ENCODE measurements at regions of chr1 and their contacts with region 1.

Region 1: GRCh38 chr1:205255941-205256780 is 28.4 kb downstream of the TMCC2 start:
- DNase-seq: peak; percentile 91
- H3K4me3 Mint-ChIP-seq: no peak overlapping the region
- H3K27ac Mint-ChIP-seq: no peak overlapping the region
- H3K4me1 Mint-ChIP-seq: no peaks in the 10 kb centered on the region
- H3K27me3 Mint-ChIP-seq: peaks cover 10% of the 10 kb centered on the region

Region 2: GRCh38 chr1:204989266-204990058 is 266.7 kb before region 1 on chr1:
- CTCF ChIA-PET with region 1: interaction called, 99 read pairs
- DNase-seq: peak; percentile 75
- H3K4me3 Mint-ChIP-seq: no peak overlapping the region
- H3K27ac Mint-ChIP-seq: no peak overlapping the region
- H3K4me1 Mint-ChIP-seq: peaks cover 14% of the 10 kb centered on the region
- H3K27me3 Mint-ChIP-seq: peaks cover 44% of the 10 kb centered on the region

Region 3: GRCh38 chr1:205042911-205043806 is 213.0 kb before region 1 on chr1 and contains the start of gene CNTN2:
- CTCF ChIA-PET with region 1: no interaction called
- DNase-seq: no peak
- H3K4me3 Mint-ChIP-seq: no peak within 1 kb of the TSS
- H3K27ac Mint-ChIP-seq: no peak within 1 kb of the TSS
- H3K4me1 Mint-ChIP-seq: no peaks in the 10 kb centered on the region
- H3K27me3 Mint-ChIP-seq: peaks cover 80% of the 10 kb centered on the region

Region 4: DNA sequence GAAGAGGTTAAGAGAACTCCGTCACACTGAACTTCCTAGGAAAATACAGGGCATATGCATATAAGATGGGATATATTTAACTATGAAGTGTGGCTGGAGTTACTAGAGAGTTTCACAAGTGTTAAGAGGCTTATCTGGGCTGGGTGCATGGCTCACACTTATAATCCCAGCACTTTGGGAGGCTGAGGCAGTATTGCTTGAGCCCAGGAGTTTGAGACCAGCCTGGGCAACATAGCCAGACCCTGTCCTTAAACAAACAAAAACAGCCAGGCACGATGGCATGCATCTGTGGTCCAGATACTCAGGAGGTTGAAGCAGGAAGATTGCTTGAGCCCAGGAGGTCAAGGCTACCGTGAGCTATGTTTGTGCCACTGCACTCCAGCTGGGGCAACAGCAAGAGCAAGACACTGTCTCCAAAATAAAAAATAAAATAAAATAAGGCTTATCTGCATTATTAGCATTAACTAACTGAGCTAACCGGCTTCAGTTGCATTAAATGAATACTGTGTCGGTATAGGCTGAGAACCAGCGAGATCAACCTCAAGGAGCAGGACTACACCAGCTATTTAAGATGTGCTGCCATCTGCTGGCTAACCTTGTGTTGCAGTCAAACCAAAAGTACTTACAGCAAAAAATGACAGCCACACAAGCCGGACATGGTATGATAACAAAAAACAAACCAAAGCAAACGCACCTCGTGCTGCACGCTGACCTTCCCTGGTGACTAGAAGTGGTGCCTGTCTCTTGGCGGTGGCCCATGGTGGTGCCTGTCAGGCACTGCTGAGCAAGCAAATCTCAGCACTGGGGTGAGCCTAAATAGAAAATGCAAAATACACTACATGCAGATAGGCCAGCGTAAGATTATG is 114.7 kb before region 1 on chr1:
- CTCF ChIA-PET with region 1: interaction called, 19 read pairs
- DNase-seq: peak; percentile 86
- H3K4me3 Mint-ChIP-seq: no peak overlapping the region
- H3K27ac Mint-ChIP-seq: no peak overlapping the region
- H3K4me1 Mint-ChIP-seq: peaks cover 6% of the 10 kb centered on the region
- H3K27me3 Mint-ChIP-seq: no peaks in the 10 kb centered on the region

Region 5: DNA sequence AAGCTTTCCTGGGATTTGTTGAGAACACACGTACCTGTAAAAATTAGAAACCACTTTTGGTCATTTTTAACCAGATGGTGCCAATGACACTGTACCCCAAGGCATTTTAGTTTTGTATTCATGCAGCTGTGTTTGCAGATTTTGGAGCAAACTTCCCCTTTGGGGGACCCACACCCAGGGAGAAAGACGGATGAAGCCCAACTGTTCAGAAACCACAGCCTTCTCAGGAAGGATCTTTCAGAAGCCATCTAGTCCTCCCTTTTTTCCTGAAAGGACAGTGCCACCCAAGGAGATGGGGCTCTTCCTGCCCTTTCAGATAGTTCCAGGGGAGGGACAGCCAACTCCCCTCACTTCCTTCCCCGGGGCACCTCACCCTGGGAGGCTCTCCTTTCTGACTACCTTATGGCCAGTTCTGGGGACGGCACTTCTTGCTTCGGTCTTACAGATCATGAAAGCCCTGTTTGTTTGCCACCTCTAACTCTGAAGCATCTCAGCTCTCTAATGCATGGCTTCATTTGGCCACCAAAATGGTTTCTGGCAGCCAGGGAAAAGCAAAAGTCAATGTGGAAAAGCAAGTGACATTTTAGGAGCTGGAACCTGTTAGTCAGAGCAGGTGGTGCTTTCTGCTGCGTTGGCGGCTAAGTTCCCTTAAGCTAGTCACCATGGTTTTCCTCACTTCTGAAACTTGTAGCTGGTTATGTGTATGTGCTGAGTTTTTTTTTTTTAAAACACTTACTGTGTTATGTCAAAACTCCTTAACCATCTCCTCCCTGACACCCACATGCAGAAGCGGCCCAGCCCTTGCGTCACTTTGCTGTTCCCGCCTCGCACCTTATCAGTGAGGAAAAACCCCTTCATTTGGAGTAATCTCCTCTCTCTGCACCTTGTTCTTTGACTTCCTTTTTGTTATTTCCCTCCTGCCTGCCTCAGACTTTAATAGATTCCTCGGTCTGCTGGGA is 18.4 kb before region 1 on chr1:
- CTCF ChIA-PET with region 1: interaction called, 224 read pairs
- DNase-seq: no peak
- H3K4me3 Mint-ChIP-seq: no peak overlapping the region
- H3K27ac Mint-ChIP-seq: no peak overlapping the region
- H3K4me1 Mint-ChIP-seq: peaks cover 19% of the 10 kb centered on the region
- H3K27me3 Mint-ChIP-seq: peaks cover 14% of the 10 kb centered on the region

Region 6: DNA sequence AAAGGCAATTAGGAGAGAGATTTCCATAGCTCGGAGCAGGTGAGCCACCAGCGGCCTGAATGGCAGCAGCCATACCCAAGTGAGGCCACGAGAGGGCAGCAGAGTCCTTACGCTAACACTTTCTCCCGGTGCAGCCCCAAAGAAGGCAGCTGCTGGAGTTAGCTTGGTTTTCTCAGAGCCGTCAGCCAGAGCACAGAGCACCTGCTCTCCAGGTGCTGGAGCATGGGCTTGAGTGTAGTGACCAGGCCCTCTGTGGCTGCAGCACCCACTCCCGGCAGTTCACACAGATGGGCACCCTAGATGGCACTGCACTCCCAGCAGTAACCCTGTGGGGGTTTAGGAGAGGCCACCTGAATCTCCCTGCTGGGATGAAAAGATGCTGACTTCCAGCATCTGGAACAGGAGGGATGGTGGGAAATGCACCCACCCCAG is 17.4 kb after region 1 on chr1:
- CTCF ChIA-PET with region 1: interaction called, 17 read pairs
- DNase-seq: peak; percentile 92
- H3K4me3 Mint-ChIP-seq: no peak overlapping the region
- H3K27ac Mint-ChIP-seq: peak overlapping the region; percentile 82
- H3K4me1 Mint-ChIP-seq: peaks cover 38% of the 10 kb centered on the region
- H3K27me3 Mint-ChIP-seq: peaks cover 26% of the 10 kb centered on the region